Activated CD4-positive, alpha-beta T cell treated with anti-CD3 and anti-CD28 coated beads, Interleukin-2, amount 10 ng/mL, durations not matched to agents 7 days and 5 days (primary cell): ENCODE measurements at regions of chr7 and their contacts with region 1.

Region 1: DNA sequence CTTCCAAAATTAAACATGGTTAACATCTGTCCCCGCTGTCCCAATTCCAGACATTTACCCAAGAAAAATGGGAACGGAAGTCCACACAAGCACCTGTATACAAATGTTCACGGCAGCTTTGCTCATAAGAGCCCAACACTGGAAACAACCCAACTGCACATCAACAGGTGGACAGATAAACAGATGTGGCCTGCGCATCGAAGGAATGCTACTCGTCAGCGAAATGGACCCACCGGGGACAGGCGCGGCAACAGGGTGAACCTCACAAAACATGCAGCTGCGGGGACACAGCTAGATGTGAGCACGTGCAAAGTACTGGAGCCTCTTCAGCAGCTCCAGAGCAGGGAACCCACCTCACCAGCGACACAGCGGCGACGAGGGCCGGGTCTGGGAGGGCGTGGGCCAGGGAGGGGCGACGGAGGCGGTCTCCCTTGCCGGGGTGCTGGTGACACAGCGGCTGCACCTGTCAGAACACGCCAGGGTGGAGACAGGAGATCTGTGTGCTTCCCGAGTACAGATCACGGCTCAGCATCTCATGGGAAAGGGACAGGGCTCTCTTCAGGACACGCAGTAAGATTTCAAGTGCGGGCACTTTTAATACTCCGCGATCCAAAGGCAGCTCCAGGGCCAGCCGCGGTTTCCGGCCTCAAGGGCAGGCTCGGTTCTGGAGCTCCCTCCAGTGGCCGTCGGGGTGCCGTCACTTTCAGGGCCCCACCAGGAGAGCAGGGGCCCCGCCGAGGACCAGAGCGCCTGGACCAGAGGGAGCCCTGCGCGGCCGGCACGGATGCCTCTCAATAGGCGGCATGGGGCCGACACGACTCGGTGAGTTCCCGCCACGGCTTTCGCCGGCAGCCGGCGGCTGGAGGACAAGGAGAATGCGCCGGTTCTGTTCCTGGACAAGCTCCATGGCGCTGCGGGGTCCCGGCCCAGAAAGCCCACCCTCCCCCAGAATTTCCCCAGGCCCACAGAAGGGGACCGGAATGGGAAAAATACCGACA is 21.2 kb downstream of the GPR146 start:
- DNase-seq: peak; percentile 88
- H3K4me3 Mint-ChIP-seq: peak overlapping the region; percentile 47
- H3K27ac Mint-ChIP-seq: peak overlapping the region; percentile 36
- H3K4me1 Mint-ChIP-seq: peaks cover 6% of the 10 kb centered on the region
- H3K27me3 Mint-ChIP-seq: no peaks in the 10 kb centered on the region

Region 2: GRCh38 chr7:855686-856369 is 209.7 kb before region 1 on chr7:
- CTCF ChIA-PET with region 1: no interaction called
- POLR2A ChIA-PET with region 1: no interaction called
- DNase-seq: no peak
- H3K4me3 Mint-ChIP-seq: no peak overlapping the region
- H3K27ac Mint-ChIP-seq: no peak overlapping the region
- H3K4me1 Mint-ChIP-seq: no peaks in the 10 kb centered on the region
- H3K27me3 Mint-ChIP-seq: no peaks in the 10 kb centered on the region

Region 3: DNA sequence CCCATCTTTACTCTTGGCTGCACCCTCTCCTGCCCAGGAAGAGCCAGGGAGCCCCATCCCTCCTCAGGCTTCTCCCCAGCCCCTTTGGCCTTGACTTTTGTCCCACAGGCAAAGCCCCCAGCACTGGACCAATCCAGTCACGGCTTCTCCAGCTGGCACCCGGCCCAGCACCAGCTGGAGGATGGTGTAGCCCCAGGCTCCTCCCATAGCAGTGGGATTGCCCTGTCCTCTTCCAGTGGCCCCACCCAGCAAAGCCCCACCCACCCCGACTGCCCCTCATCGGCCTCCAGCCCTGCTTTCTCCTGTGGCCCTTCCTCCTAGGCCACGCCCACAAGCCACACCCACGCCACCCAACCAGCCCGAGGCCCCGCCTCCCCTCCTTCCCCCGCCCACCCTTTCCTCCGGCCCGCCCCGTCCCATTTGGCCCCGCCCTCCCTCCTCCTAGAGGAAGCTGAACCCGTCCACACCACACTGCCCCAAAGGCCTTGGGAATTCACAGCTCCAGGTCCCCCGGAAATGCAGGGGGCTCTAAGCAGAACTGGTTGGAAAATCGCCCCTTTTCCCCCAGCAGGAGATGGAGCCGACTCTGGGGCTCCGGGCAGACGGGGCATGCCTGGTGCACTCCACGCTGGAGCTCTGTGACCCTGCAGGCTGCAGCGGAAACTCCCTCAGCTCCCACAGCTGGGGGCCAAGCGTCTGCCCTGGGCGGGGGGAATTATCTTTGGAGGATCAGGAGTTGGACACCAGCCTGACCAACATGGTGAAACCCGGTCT is 164.0 kb before region 1 on chr7:
- CTCF ChIA-PET with region 1: no interaction called
- POLR2A ChIA-PET with region 1: no interaction called
- DNase-seq: peak; percentile 39
- H3K4me3 Mint-ChIP-seq: no peak overlapping the region
- H3K27ac Mint-ChIP-seq: no peak overlapping the region
- H3K4me1 Mint-ChIP-seq: no peaks in the 10 kb centered on the region
- H3K27me3 Mint-ChIP-seq: no peaks in the 10 kb centered on the region

Region 4: DNA sequence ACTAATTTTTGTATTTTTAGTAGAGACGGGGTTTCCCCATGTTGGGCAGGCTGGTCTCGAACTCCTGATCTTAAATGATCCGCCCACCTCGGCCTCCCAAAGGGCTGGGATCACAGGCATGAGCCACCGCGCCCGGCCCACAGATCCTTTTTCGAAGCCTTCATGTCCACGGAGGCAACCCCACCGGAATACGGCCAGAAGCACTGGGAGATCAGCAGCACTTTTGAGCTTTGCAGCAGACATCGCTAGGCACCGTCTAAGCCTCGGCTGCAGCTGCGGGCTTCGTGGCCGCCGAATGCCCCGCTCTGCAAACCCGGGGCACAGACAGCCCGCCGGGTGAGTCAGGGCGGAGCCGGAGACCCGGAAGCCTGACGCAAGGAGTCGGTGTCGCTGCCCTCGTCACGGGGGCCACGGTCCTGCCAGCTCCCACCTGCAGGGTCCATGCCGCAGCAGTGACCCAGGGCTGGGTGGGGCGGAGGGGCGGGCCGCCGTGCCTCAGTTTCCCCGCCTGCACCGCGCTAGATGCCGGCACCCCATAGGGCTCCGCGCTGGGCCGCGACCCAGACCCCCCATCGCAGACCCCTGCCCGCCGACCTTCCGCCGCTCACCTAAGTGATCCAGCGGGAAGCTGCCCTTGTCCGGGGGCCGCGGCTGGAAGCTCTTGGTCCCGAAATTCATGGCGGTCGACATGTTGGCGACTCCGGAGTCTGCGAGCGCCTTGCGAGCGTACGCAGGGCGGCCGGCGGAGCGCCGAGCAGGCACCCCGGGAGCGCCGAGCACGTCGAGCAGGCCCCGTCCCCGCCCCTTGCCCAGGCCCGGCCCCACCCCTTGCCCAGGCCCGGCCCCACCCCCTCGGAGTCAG is 90.5 kb before region 1 on chr7 and contains the start of gene COX19:
- CTCF ChIA-PET with region 1: interaction called, 10 read pairs
- POLR2A ChIA-PET with region 1: no interaction called
- DNase-seq: peak; percentile 87
- H3K4me3 Mint-ChIP-seq: peak within 1 kb of the TSS; percentile 91
- H3K27ac Mint-ChIP-seq: peak within 1 kb of the TSS; percentile 91
- H3K4me1 Mint-ChIP-seq: peaks cover 28% of the 10 kb centered on the region
- H3K27me3 Mint-ChIP-seq: no peaks in the 10 kb centered on the region
- total RNA-seq, gene COX19: 18.2 to 20.1 TPM

Region 5: GRCh38 chr7:985915-986741 is 79.4 kb before region 1 on chr7:
- CTCF ChIA-PET with region 1: interaction called, 154 read pairs
- POLR2A ChIA-PET with region 1: no interaction called
- DNase-seq: no peak
- H3K4me3 Mint-ChIP-seq: no peak overlapping the region
- H3K27ac Mint-ChIP-seq: no peak overlapping the region
- H3K4me1 Mint-ChIP-seq: no peaks in the 10 kb centered on the region
- H3K27me3 Mint-ChIP-seq: peaks cover 2% of the 10 kb centered on the region

Region 6: DNA sequence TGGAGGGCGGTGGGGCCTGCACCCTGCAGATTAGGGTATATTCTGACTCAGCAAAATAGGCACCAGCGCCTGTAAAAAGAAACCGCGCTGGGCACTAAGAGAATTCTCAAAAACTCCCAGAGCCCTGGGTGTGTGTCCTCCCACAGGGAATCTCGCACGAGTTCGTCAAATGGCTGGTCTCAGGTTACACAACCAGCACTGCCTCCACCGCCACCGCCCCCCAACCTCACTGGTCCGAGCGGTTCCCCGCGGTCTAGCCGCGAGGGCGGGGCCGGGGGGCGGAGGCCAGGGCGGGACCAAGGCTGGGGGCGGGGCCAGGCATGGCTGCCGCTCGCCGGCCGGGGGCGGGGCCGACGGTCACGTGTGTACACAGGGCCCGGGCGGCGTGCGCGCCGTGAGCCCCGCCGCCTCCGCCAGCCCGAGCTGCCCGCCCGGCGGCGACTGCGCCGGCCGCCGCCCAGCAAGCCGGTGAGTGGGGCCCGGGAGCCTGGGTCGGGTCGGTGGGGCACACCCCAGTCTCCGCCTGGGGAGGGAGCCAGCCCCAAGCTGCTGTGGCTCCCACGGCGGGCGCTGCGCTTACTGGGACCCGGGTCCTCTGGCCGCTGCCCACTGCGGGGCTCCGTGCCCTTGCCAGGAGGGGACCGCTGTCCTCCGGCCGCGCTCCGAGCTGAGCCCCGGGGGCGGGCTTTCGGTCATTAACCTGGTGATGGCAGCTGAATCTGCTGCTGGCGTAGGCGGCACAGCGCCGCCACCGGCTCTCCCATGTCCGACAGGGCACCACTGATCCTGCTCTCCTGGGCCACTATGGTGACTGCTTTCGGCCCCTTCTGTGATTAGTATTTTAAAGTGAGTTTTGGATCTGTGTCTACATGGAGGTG is 21.1 kb before region 1 on chr7 and contains the start of gene GPR146:
- CTCF ChIA-PET with region 1: interaction called, 19 read pairs
- POLR2A ChIA-PET with region 1: no interaction called
- DNase-seq: peak; percentile 90
- H3K4me3 Mint-ChIP-seq: peak within 1 kb of the TSS; percentile 81
- H3K27ac Mint-ChIP-seq: peak within 1 kb of the TSS; percentile 88
- H3K4me1 Mint-ChIP-seq: peaks cover 73% of the 10 kb centered on the region
- H3K27me3 Mint-ChIP-seq: no peaks in the 10 kb centered on the region
- total RNA-seq, gene GPR146: 13.3 to 13.8 TPM

Region 7: GRCh38 chr7:1076181-1077072 is 10.9 kb after region 1 on chr7:
- CTCF ChIA-PET with region 1: interaction called, 11 read pairs
- POLR2A ChIA-PET with region 1: no interaction called
- DNase-seq: no peak
- H3K4me3 Mint-ChIP-seq: no peak overlapping the region
- H3K27ac Mint-ChIP-seq: no peak overlapping the region
- H3K4me1 Mint-ChIP-seq: no peaks in the 10 kb centered on the region
- H3K27me3 Mint-ChIP-seq: no peaks in the 10 kb centered on the region

Region 8: GRCh38 chr7:1086588-1087464 is 21.3 kb after region 1 on chr7:
- CTCF ChIA-PET with region 1: interaction called, 14 read pairs
- POLR2A ChIA-PET with region 1: no interaction called
- DNase-seq: peak; percentile 75
- H3K4me3 Mint-ChIP-seq: peak overlapping the region; percentile 58
- H3K27ac Mint-ChIP-seq: no peak overlapping the region
- H3K4me1 Mint-ChIP-seq: peaks cover 12% of the 10 kb centered on the region
- H3K27me3 Mint-ChIP-seq: no peaks in the 10 kb centered on the region

Region 9: GRCh38 chr7:1275451-1276381 is 210.2 kb after region 1 on chr7:
- CTCF ChIA-PET with region 1: no interaction called
- POLR2A ChIA-PET with region 1: no interaction called
- DNase-seq: no peak
- H3K4me3 Mint-ChIP-seq: no peak overlapping the region
- H3K27ac Mint-ChIP-seq: no peak overlapping the region
- H3K4me1 Mint-ChIP-seq: no peaks in the 10 kb centered on the region
- H3K27me3 Mint-ChIP-seq: no peaks in the 10 kb centered on the region